MCF 10A (cell line): ENCODE measurements at regions of chr6 and their contacts with region 1.

Region 1: DNA sequence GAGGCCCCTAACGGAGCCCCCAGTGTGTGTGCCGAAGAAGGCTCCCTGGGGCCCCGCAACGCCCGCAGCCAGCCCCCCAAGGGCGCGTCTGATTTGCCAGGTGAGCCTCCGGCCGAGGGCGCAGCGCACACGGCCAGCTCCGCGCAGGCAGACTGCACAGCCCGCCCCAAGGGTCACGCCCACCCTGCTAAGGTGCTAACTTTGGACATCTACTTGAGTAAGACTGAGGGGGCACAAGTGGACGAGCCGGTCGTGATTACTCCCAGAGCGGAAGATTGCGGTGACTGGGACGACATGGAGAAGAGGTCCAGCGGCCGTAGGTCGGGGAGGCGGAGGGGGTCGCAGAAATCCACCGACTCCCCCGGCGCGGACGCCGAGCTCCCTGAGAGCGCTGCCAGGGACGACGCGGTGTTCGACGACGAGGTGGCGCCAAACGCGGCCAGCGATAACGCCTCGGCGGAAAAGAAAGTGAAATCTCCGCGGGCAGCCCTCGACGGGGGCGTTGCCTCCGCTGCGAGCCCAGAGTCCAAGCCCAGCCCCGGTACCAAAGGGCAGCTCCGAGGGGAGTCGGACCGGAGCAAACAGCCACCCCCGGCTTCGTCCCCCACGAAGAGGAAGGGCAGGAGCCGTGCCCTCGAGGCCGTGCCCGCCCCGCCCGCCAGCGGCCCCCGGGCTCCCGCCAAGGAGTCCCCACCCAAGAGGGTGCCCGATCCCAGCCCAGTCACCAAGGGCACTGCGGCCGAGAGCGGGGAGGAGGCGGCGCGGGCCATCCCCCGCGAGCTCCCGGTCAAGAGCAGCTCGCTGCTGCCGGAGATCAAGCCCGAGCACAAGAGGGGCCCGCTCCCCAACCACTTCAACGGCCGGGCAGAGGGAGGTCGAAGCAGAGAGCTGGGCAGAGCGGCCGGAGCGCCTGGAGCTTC is 117.0 kb downstream of the RTN4IP1 start:
- DNase-seq: peak; percentile 75
- H3K4me3 Mint-ChIP-seq: peak overlapping the region; percentile 95
- H3K27ac Mint-ChIP-seq: peak overlapping the region; percentile 96
- H3K4me1 Mint-ChIP-seq: peaks cover 41% of the 10 kb centered on the region
- H3K27me3 Mint-ChIP-seq: no peaks in the 10 kb centered on the region
- CTCF ChIP-seq: no peak

Region 2: GRCh38 chr6:106451439-106451838 is 60.9 kb before region 1 on chr6:
- CTCF ChIA-PET with region 1: interaction called, 4 read pairs
- POLR2A ChIA-PET with region 1: interaction called, 93 read pairs
- intact Hi-C with region 1: loop called (anchors 1 kb)
- DNase-seq: peak; percentile 25
- H3K4me3 Mint-ChIP-seq: no peak overlapping the region
- H3K27ac Mint-ChIP-seq: peak overlapping the region; percentile 43
- H3K4me1 Mint-ChIP-seq: peaks cover 25% of the 10 kb centered on the region
- H3K27me3 Mint-ChIP-seq: no peaks in the 10 kb centered on the region
- CTCF ChIP-seq: no peak

Region 3: DNA sequence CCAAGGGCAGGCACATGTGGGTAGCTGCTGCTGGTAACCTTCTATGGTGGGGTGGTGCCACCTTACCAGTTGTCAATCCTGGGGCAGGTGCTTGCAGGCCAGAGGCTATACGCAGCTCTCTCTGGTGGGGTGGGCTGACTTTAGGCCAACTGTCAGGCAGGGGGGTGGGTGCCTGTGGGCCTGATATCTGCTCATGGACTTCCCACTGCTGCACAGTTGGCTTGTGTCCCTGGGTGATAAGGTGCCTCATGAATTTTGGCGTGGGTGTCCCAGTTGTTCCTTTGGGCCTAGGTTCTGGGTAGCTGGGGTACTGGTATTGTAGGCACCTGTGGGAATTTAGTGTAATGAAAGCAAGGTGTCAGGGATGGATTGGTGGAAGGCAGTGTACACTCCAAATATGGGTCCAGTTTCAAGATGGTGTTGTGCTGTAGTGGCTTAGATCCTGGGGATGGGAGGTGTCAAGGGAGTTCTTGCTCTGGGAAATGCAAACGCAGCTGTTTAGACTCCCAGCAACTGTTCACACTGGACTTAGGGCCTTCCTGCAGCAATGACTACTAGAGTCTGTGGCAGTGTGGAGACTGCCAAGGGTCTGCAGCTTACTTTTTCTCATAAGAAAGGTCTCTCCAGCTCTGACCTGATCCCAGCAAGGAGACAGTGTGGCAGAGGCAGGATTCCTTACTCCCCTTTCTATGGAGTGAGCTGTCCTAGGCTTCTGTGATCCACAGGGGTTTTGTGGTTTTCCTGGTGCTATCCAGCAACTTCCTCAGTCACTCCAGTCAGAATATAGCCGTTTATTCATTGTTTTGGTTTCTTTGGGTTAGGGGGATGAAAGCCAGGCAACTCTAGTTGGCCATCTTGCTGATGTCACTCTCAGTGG is 23.6 kb before region 1 on chr6:
- CTCF ChIA-PET with region 1: no interaction called
- POLR2A ChIA-PET with region 1: interaction called, 89 read pairs
- intact Hi-C with region 1: no loop called
- DNase-seq: no peak
- H3K4me3 Mint-ChIP-seq: no peak overlapping the region
- H3K27ac Mint-ChIP-seq: no peak overlapping the region
- H3K4me1 Mint-ChIP-seq: peaks cover 34% of the 10 kb centered on the region
- H3K27me3 Mint-ChIP-seq: no peaks in the 10 kb centered on the region
- CTCF ChIP-seq: no peak

Region 4: DNA sequence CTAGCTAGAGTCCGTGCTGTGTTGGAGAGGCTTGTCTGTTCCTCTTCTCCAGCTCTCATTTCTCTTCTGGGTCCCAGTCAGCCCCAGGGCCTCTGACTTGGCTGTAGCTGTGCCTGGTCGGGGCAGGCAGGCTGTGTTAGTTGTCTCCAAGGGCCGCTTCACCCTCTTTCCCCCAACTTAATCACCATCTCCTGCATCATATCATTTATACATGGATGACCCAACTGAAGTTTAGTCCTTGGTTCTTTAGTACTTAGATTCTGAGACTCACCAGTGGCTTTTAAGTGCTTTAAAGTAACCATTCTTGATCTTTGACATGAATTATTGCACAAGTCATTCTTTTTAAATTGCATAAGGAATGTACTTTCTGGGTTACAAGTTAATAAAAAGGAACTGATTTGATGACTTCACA is 10.3 kb before region 1 on chr6:
- CTCF ChIA-PET with region 1: interaction called, 6 read pairs
- POLR2A ChIA-PET with region 1: interaction called, 44 read pairs
- intact Hi-C with region 1: no loop called
- DNase-seq: peak; percentile 64
- H3K4me3 Mint-ChIP-seq: peak overlapping the region; percentile 25
- H3K27ac Mint-ChIP-seq: peak overlapping the region; percentile 74
- H3K4me1 Mint-ChIP-seq: peaks cover 35% of the 10 kb centered on the region
- H3K27me3 Mint-ChIP-seq: no peaks in the 10 kb centered on the region
- CTCF ChIP-seq: no peak

Region 5: DNA sequence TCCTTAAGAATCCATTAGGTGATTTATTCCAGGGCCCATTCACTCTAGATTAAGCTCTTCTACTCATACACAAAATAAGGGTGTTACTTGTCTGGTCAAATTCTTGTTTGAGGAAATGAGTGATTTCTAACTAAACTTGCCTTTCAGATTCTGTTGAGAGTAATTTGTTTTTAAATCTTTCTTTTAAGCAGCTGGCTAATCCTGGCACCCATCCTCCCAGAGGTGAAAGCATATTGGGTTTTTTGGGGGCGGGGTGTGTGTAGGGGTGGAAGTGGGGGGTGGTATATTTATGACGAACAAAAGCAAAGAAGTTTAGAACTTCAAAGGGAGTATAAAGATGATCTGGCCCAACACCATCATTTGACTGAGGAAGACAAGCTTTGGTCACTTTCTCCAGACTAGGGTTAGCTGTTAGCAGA is 22.3 kb after region 1 on chr6:
- CTCF ChIA-PET with region 1: interaction called, 4 read pairs
- POLR2A ChIA-PET with region 1: interaction called, 27 read pairs
- intact Hi-C with region 1: no loop called
- DNase-seq: no peak
- H3K4me3 Mint-ChIP-seq: no peak overlapping the region
- H3K27ac Mint-ChIP-seq: peak overlapping the region; percentile 74
- H3K4me1 Mint-ChIP-seq: peaks cover 32% of the 10 kb centered on the region
- H3K27me3 Mint-ChIP-seq: no peaks in the 10 kb centered on the region
- CTCF ChIP-seq: no peak

Region 6: GRCh38 chr6:106556368-106556960 is 44.2 kb after region 1 on chr6:
- CTCF ChIA-PET with region 1: interaction called, 26 read pairs
- POLR2A ChIA-PET with region 1: interaction called, 152 read pairs
- intact Hi-C with region 1: loop called (anchors 1 kb)
- DNase-seq: no peak
- H3K4me3 Mint-ChIP-seq: no peak overlapping the region
- H3K27ac Mint-ChIP-seq: no peak overlapping the region
- H3K4me1 Mint-ChIP-seq: peaks cover 23% of the 10 kb centered on the region
- H3K27me3 Mint-ChIP-seq: no peaks in the 10 kb centered on the region
- CTCF ChIP-seq: peak; percentile 38

Region 7: GRCh38 chr6:106591111-106591825 is 79.0 kb after region 1 on chr6:
- CTCF ChIA-PET with region 1: no interaction called
- POLR2A ChIA-PET with region 1: no interaction called
- intact Hi-C with region 1: no loop called
- DNase-seq: peak; percentile 38
- H3K4me3 Mint-ChIP-seq: no peak overlapping the region
- H3K27ac Mint-ChIP-seq: peak overlapping the region; percentile 33
- H3K4me1 Mint-ChIP-seq: peaks cover 6% of the 10 kb centered on the region
- H3K27me3 Mint-ChIP-seq: no peaks in the 10 kb centered on the region
- CTCF ChIP-seq: no peak

Region 8: GRCh38 chr6:106997390-106998158 is 485.3 kb after region 1 on chr6:
- CTCF ChIA-PET with region 1: no interaction called
- POLR2A ChIA-PET with region 1: no interaction called
- intact Hi-C with region 1: loop called (anchors 5 kb)
- DNase-seq: peak; percentile 67
- H3K4me3 Mint-ChIP-seq: no peak overlapping the region
- H3K27ac Mint-ChIP-seq: no peak overlapping the region
- H3K4me1 Mint-ChIP-seq: no peaks in the 10 kb centered on the region
- H3K27me3 Mint-ChIP-seq: no peaks in the 10 kb centered on the region
- CTCF ChIP-seq: peak; percentile 67